ENCODE measurements at regions of chr6 and their contacts with region 1.

Region 1: GRCh38 chr6:127302728-127303660 is 36.3 kb downstream of the RNF146 start:
- DNase-seq: no peak
- ATAC-seq: peak; percentile 94
- H3K4me3 Mint-ChIP-seq: no peak overlapping the region
- H3K27ac Mint-ChIP-seq: peak overlapping the region; percentile 24
- H3K4me1 Mint-ChIP-seq: peaks cover 24% of the 10 kb centered on the region
- H3K27me3 Mint-ChIP-seq: no peaks in the 10 kb centered on the region
- CTCF ChIP-seq: peak; percentile 40

Region 2: DNA sequence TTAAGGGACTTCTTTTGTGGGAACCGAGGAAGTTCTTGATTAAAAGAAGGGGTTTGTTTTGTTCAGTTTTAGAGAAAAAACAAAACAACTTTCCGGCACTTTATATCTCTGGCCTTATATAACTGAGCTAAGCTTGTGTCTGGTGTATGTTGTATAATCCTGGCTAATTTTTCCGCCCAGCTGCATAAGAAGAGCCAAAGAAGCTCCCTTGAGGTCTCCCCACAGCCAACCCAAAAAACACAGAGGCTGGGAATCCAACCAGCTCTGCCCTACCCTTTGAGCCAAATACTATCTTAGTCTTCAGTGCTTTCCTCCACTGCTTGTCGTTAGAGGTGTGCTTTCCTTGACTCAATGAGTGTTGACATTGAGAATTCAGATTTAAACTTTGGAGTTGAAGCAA is 81.8 kb before region 1 on chr6:
- CTCF ChIA-PET with region 1: no interaction called
- POLR2A ChIA-PET with region 1: no interaction called
- intact Hi-C with region 1: no loop called
- DNase-seq: no peak
- ATAC-seq: no peak
- H3K4me3 Mint-ChIP-seq: no peak overlapping the region
- H3K27ac Mint-ChIP-seq: no peak overlapping the region
- H3K4me1 Mint-ChIP-seq: no peaks in the 10 kb centered on the region
- H3K27me3 Mint-ChIP-seq: peaks cover 4% of the 10 kb centered on the region
- CTCF ChIP-seq: no peak

Region 3: DNA sequence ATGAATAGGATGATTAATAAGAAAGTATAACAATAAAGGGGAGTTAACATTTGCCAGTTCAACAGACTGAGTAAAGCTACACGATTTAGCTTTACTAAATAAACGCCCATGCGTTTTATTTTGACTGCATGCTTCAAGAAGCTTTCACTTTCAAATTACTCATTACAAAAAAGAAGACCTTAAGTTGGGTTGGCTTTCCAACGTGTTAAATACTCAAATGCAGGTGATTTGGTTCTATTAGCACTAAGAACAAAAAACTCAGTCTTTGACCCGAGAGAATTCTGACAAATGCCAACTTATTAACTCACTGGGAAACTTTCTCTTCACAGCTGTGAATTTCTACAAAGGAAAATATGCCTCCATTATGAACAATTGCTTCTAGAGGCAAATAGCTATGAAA is 11.5 kb before region 1 on chr6:
- CTCF ChIA-PET with region 1: interaction called, 6 read pairs
- POLR2A ChIA-PET with region 1: no interaction called
- intact Hi-C with region 1: loop called (anchors 1 kb)
- DNase-seq: no peak
- ATAC-seq: peak; percentile 84
- H3K4me3 Mint-ChIP-seq: peak overlapping the region; percentile 64
- H3K27ac Mint-ChIP-seq: peak overlapping the region; percentile 79
- H3K4me1 Mint-ChIP-seq: peaks cover 25% of the 10 kb centered on the region
- H3K27me3 Mint-ChIP-seq: no peaks in the 10 kb centered on the region
- CTCF ChIP-seq: no peak

Region 4: DNA sequence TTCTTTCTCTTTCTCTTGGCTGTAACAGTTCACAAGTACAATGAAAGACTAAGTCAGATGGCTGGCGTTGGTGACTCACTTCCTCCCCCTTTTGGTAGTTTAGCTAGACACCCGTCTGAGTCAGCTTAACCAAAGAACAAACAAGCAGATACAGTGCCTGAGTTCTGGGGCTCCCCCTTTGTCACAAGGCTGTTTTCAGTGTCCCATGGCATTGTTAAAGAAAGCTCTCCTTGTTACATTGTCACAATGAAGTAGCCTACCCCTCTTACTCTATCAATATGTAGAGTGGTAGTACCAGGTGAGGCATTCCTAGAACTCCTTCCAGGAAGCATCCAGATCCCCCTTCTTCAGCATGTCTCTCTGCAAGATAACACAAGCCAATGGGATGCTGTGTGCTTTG is 117.6 kb after region 1 on chr6:
- CTCF ChIA-PET with region 1: interaction called, 60 read pairs
- POLR2A ChIA-PET with region 1: no interaction called
- intact Hi-C with region 1: loop called (anchors 1 kb)
- DNase-seq: no peak
- ATAC-seq: peak; percentile 99
- H3K4me3 Mint-ChIP-seq: peak overlapping the region; percentile 28
- H3K27ac Mint-ChIP-seq: no peak overlapping the region
- H3K4me1 Mint-ChIP-seq: peaks cover 21% of the 10 kb centered on the region
- H3K27me3 Mint-ChIP-seq: no peaks in the 10 kb centered on the region
- CTCF ChIP-seq: no peak

Region 5: DNA sequence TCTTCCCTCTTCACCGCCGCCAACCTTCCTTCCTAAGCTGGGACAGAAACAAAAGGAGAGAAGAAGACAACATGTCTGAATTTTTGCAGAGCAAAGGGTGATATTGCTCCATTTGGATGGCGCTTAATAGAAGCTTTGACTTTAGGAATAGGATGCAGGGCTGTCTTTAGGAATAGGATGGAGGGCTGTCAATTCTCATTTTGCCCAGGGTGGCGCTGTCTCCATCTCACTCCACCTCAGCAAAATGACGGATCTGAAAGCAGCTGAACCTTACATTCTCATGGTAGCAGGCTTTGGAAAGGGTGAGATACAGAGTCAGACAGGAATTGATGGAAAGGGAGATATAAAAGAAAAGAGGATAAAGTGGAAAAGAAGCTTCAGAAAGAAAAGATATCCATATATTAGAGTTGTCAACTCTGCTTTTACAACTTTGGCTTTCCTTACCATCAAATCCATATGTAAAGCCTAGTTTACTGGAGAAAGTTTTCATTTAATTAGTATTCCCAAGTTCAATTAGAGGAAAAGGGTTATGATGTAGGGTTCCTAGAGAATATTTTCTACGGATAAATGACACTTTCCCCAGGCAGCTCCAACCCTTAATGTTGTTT is 213.8 kb after region 1 on chr6:
- CTCF ChIA-PET with region 1: interaction called, 4 read pairs
- POLR2A ChIA-PET with region 1: no interaction called
- intact Hi-C with region 1: loop called (anchors 2 kb)
- DNase-seq: no peak
- ATAC-seq: peak; percentile 41
- H3K4me3 Mint-ChIP-seq: peak overlapping the region; percentile 86
- H3K27ac Mint-ChIP-seq: peak overlapping the region; percentile 35
- H3K4me1 Mint-ChIP-seq: peaks cover 28% of the 10 kb centered on the region
- H3K27me3 Mint-ChIP-seq: peaks cover 46% of the 10 kb centered on the region
- CTCF ChIP-seq: no peak

Region 6: GRCh38 chr6:127641905-127642304 is 338.9 kb after region 1 on chr6:
- CTCF ChIA-PET with region 1: interaction called, 4 read pairs
- POLR2A ChIA-PET with region 1: no interaction called
- intact Hi-C with region 1: loop called (anchors 2 kb)
- DNase-seq: no peak
- ATAC-seq: no peak
- H3K4me3 Mint-ChIP-seq: no peak overlapping the region
- H3K27ac Mint-ChIP-seq: no peak overlapping the region
- H3K4me1 Mint-ChIP-seq: no peaks in the 10 kb centered on the region
- H3K27me3 Mint-ChIP-seq: peaks cover 5% of the 10 kb centered on the region
- CTCF ChIP-seq: no peak

Region 7: GRCh38 chr6:127737009-127737486 is 434.1 kb after region 1 on chr6:
- CTCF ChIA-PET with region 1: no interaction called
- POLR2A ChIA-PET with region 1: no interaction called
- intact Hi-C with region 1: no loop called
- DNase-seq: no peak
- ATAC-seq: no peak
- H3K4me3 Mint-ChIP-seq: no peak overlapping the region
- H3K27ac Mint-ChIP-seq: no peak overlapping the region
- H3K4me1 Mint-ChIP-seq: peaks cover 1% of the 10 kb centered on the region
- H3K27me3 Mint-ChIP-seq: no peaks in the 10 kb centered on the region
- CTCF ChIP-seq: no peak

Region 8: DNA sequence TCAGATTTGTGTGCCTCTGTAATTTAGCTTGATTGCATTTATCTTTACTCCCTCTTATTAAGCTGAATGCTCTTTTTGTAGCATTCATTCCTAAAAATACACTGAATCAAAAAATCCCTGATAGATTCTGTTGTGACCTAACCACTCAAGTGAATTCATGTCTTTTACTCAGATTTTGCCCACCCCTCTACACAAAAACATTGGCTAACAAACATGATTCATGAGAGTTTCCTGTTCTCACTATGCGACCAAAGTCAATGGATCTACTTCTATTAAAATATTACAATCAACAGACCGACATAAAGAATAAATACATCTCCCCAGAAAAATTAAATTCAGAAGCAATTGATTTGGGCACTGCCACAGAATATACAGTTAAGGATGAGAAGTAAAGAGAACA is 697.4 kb after region 1 on chr6:
- CTCF ChIA-PET with region 1: no interaction called
- POLR2A ChIA-PET with region 1: no interaction called
- intact Hi-C with region 1: no loop called
- DNase-seq: no peak
- ATAC-seq: no peak
- H3K4me3 Mint-ChIP-seq: no peak overlapping the region
- H3K27ac Mint-ChIP-seq: no peak overlapping the region
- H3K4me1 Mint-ChIP-seq: no peaks in the 10 kb centered on the region
- H3K27me3 Mint-ChIP-seq: no peaks in the 10 kb centered on the region
- CTCF ChIP-seq: no peak

Measured in activated B cell treated with CpG ODN at 0.5 μM for 24 hours (primary cell).